ENCODE measurements at regions of chr13 and their contacts with region 1.

Region 1: DNA sequence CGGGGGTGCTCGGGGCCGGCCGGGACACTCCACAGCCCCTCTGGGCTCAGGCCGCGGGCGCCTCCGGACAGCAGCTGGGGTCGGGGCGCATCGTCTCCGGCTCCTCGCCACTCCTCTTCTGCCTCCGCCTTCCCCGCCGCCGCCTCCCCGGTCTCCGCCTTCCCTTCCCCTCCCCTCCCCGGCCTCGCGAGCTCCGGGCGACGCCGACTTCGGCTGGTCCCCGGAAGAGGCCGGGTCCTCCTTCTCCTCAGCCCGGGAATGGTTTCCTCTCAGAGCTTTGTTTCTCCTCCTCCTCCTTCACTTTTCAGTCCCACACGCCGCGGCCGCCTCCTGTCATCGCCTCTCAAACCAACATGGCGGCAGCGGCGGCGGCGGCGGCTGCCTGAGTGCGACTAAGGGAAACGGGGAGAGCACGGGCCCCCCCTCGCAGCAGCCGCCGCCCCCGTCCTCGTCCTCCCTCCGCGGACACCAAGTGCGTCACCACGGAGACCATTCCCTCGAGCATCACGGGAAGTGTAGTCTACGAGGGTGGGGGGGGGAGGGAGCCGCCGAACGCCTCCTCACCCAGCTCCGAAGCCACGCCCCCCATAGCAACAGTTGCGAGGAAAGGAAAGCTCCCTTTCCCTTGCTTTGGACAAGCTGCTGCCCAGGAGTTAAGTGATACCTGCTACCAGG is at the start of gene UBL3:
- DNase-seq: peak; percentile 98
- H3K4me3 ChIP-seq: peak within 1 kb of the TSS; percentile 67 to 68
- H3K27ac ChIP-seq: peak within 1 kb of the TSS; percentile 97 to 99
- H3K4me1 ChIP-seq: no peaks in the 10 kb centered on the region
- H3K27me3 ChIP-seq: no peaks in the 10 kb centered on the region
- CTCF ChIP-seq: no peak
- POLR2A ChIP-seq: peak; percentile 94
- total RNA-seq, gene UBL3: 36.3 to 38.2 TPM

Region 2: GRCh38 chr13:29513397-29514322 is 336.7 kb before region 1 on chr13:
- intact Hi-C with region 1: loop called (anchors 5 kb)
- DNase-seq: no peak
- H3K4me3 ChIP-seq: no peak overlapping the region
- H3K27ac ChIP-seq: no peak overlapping the region
- H3K4me1 ChIP-seq: no peaks in the 10 kb centered on the region
- H3K27me3 ChIP-seq: no peaks in the 10 kb centered on the region
- CTCF ChIP-seq: no peak
- POLR2A ChIP-seq: no peak

Region 3: DNA sequence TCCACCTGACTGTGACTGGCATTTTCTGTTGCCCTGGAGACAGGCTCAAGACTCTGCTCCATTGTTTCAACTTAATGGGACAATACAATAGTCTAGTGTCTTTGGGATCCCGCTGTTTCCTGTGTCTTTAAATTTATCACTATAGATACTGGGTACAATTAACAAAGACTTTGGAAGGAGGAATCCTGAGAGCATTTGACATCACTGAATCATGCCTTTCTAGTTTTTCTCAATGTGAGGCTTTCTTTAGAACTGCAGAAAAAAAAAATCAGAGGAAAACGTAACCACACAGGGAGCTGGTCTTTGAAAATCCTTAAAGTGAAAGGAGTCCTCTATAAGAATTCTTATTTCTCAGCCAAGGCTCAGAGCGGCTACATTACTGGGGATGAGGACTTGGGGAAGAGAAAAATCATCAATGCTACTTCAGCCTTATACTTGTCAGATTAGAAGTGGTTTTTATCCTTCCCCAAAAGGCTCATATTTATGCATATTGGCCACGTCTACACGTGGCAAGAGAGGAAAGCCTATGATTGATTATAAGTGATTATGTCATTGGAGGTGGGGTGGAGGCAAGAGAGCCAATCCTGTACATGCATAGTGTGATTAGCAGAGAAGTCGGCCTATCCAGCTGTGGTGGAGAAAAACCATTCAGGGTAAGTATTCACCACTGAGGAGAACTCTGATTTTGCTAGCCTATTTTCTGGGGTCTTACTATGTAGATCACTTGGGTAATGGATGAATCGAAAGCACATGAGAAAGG is 34.5 kb after region 1 on chr13:
- intact Hi-C with region 1: no loop called
- DNase-seq: no peak
- H3K4me3 ChIP-seq: no peak overlapping the region
- H3K27ac ChIP-seq: no peak overlapping the region
- H3K4me1 ChIP-seq: no peaks in the 10 kb centered on the region
- H3K27me3 ChIP-seq: no peaks in the 10 kb centered on the region
- CTCF ChIP-seq: no peak
- POLR2A ChIP-seq: no peak

Region 4: GRCh38 chr13:29923554-29924481 is 73.5 kb after region 1 on chr13:
- intact Hi-C with region 1: loop called (anchors 5 kb)
- DNase-seq: peak; percentile 92
- H3K4me3 ChIP-seq: no peak overlapping the region
- H3K27ac ChIP-seq: peak overlapping the region; percentile 75 to 76
- H3K4me1 ChIP-seq: peaks cover 12% of the 10 kb centered on the region
- H3K27me3 ChIP-seq: no peaks in the 10 kb centered on the region
- CTCF ChIP-seq: peak; percentile 70 to 92 (median 80)
- POLR2A ChIP-seq: peak; percentile 21